Spleen (tissue), 13 donors: ENCODE measurements at regions of chr3 and their contacts with region 1.

Region 1: DNA sequence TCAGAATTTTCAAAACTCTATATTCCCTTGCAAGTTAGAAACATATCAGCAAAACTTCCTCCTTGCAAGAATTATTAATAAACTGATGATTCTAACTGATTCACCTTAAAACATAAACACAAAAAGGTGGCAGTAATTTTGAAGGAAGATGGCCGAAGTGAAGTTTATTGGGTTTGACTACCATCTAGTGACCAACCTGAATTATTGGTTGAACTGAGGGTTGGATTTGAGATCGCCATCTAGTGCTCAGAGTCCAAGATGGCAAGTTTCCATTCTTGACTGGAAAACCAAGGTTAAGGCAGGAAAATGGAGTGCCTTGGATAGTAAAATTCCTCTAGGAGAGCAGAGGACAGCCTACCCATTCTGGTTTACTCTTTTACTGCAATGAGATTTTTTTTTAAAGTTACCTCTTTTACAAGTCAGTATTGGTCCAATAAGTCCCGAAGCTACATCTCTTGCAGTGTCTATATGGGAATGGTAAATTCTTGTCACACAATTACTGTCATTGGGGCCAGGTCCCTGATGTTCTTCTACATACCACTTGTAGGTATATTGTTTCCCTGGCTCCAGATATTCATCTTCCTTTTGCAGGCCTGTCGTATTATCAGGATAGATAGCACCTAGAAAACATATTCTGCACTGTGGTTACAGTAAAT is 51.6 kb upstream of the CP start:
- DNase-seq: no peak
- H3K4me3 ChIP-seq: no peak overlapping the region
- H3K27ac ChIP-seq: no peak overlapping the region
- H3K4me1 ChIP-seq: peaks cover 0 to 23% (median 18%) of the 10 kb centered on the region in 6 donors
- H3K27me3 ChIP-seq: no peaks in the 10 kb centered on the region
- CTCF ChIP-seq: peak; percentile 80 to 98 (median 89)
- POLR2A ChIP-seq: no peak

Region 2: DNA sequence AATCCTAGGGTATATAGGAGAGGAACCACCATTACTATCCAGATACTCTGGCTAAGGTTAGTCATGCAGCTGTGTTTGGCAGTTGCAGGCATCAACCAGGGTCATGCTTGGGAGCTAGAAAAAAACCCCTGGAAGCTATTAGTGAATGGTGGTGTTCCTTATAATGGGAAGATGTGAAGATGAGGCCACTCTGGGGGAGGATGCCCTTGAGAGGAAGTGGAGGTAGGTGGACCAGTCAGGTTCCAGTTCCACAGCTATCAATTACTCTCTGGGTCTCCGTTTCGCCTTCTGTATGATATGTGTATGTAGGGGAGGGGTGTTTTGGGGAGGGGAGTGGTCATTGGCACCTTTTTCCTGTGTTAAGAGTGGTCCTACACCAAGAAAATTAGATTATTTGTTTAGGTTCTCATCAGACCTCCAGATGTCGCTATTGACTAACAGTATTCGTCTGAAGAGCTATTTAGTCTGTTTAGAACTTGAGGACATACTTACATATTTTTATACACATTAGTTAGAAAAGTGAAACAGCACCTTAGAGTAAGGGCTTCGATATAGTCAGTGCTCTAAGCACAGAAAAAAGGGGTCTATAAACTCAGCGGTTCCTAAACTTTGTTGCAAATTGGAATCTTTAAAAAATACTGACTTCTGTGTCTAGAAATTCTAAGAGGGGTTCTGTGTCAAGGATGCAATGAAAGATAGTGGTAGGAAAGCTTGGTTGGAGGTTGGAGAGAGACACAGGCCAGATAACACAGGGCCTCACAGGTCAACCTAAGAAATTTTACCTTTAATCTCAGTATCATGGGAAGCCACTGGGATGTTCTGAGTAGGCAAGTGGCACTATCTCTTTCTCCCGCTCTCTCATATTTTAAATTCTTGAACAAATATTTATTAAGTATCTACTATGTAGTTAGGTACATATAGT is 152.9 kb before region 1 on chr3:
- intact Hi-C with region 1: loop called (anchors 2 kb)
- DNase-seq: no peak
- H3K4me3 ChIP-seq: no peak overlapping the region
- H3K27ac ChIP-seq: no peak overlapping the region
- H3K4me1 ChIP-seq: peaks cover 0 to 8% (median 1%) of the 10 kb centered on the region in 6 donors
- H3K27me3 ChIP-seq: no peaks in the 10 kb centered on the region
- CTCF ChIP-seq: peak; percentile 27 to 72 (median 55)
- POLR2A ChIP-seq: no peak

Region 3: GRCh38 chr3:149638228-149639092 is 365.2 kb after region 1 on chr3:
- intact Hi-C with region 1: no loop called
- DNase-seq: no peak
- H3K4me3 ChIP-seq: peak overlapping the region in 3 of 8 donors; percentile 6 to 28 (median 22)
- H3K27ac ChIP-seq: peak overlapping the region in 5 of 8 donors; percentile 1 to 48 (median 29)
- H3K4me1 ChIP-seq: peaks cover 0 to 23% (median 9%) of the 10 kb centered on the region in 6 donors
- H3K27me3 ChIP-seq: peaks cover 0 to 19% (median 0%) of the 10 kb centered on the region in 7 donors
- CTCF ChIP-seq: no peak
- POLR2A ChIP-seq: no peak